ENCODE measurements at regions of chr6 and their contacts with region 1.

Region 1: GRCh38 chr6:107847844-107848802 is 24.0 kb upstream of the SCML4 start:
- DNase-seq: peak; percentile 94

Region 2: GRCh38 chr6:107704347-107705013 is 143.6 kb before region 1 on chr6:
- intact Hi-C with region 1: loop called (anchors 10 kb)
- DNase-seq: no peak